Activated CD4-positive, alpha-beta T cell treated with anti-CD3 and anti-CD28 coated beads, Interleukin-2, amount 10 ng/mL, durations not matched to agents 24 days and 14 days (primary cell): ENCODE measurements at regions of chr12 and their contacts with region 1.

Region 1: GRCh38 chr12:58443273-58443980 is 476.9 kb downstream of the LRIG3 start:
- DNase-seq: peak; percentile 73
- H3K4me3 Mint-ChIP-seq: no peak overlapping the region
- H3K27ac Mint-ChIP-seq: no peak overlapping the region
- H3K4me1 Mint-ChIP-seq: no peaks in the 10 kb centered on the region
- H3K27me3 Mint-ChIP-seq: peaks cover 19% of the 10 kb centered on the region

Region 2: GRCh38 chr12:58346032-58346632 is 97.3 kb before region 1 on chr12:
- intact Hi-C with region 1: loop called (anchors 1 kb)
- DNase-seq: no peak
- H3K4me3 Mint-ChIP-seq: no peak overlapping the region
- H3K27ac Mint-ChIP-seq: no peak overlapping the region
- H3K4me1 Mint-ChIP-seq: no peaks in the 10 kb centered on the region
- H3K27me3 Mint-ChIP-seq: peaks cover 4% of the 10 kb centered on the region